HEK293 (cell line): ENCODE measurements at regions of chr11 and their contacts with region 1.

Region 1: DNA sequence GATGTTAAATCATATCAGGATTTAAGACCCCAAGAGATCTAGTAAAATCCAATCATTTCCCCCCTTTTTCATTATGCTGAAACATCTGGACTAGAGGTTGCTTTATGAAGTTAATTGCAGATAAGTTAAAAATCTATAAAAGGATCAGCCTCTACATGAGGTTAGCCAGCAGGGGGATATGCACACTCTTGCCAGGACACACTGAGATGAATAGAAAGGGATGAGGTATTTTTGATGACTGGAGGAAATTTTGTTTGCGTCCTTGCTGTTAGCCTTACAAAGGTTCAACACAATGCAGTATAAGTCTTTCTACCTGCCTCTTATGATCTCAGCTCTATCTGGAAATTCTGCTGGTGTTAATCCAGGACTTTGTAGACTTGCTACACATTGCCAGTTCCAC is 1034.3 kb downstream of the LRRC4C start:
- H3K4me3 ChIP-seq: no peak overlapping the region
- H3K27ac ChIP-seq: no peak overlapping the region
- H3K4me1 ChIP-seq: no peaks in the 10 kb centered on the region
- CTCF ChIP-seq: no peak

Region 2: GRCh38 chr11:40252236-40252635 is 172.9 kb before region 1 on chr11:
- CTCF ChIA-PET with region 1: no interaction called
- POLR2A ChIA-PET with region 1: no interaction called
- H3K4me3 ChIP-seq: no peak overlapping the region
- H3K27ac ChIP-seq: no peak overlapping the region
- H3K4me1 ChIP-seq: no peaks in the 10 kb centered on the region
- CTCF ChIP-seq: no peak

Region 3: GRCh38 chr11:42085736-42086135 is 1660.6 kb after region 1 on chr11:
- CTCF ChIA-PET with region 1: interaction called, 11 read pairs
- POLR2A ChIA-PET with region 1: no interaction called
- H3K4me3 ChIP-seq: no peak overlapping the region
- H3K27ac ChIP-seq: no peak overlapping the region
- H3K4me1 ChIP-seq: no peaks in the 10 kb centered on the region
- CTCF ChIP-seq: no peak